GM18951 (cell line): ENCODE measurements at regions of chr1 and their contacts with region 1.

Region 1: GRCh38 chr1:109773146-109773899 is 9.6 kb upstream of the EPS8L3 start:
- POLR2A ChIP-seq: no peak

Region 2: DNA sequence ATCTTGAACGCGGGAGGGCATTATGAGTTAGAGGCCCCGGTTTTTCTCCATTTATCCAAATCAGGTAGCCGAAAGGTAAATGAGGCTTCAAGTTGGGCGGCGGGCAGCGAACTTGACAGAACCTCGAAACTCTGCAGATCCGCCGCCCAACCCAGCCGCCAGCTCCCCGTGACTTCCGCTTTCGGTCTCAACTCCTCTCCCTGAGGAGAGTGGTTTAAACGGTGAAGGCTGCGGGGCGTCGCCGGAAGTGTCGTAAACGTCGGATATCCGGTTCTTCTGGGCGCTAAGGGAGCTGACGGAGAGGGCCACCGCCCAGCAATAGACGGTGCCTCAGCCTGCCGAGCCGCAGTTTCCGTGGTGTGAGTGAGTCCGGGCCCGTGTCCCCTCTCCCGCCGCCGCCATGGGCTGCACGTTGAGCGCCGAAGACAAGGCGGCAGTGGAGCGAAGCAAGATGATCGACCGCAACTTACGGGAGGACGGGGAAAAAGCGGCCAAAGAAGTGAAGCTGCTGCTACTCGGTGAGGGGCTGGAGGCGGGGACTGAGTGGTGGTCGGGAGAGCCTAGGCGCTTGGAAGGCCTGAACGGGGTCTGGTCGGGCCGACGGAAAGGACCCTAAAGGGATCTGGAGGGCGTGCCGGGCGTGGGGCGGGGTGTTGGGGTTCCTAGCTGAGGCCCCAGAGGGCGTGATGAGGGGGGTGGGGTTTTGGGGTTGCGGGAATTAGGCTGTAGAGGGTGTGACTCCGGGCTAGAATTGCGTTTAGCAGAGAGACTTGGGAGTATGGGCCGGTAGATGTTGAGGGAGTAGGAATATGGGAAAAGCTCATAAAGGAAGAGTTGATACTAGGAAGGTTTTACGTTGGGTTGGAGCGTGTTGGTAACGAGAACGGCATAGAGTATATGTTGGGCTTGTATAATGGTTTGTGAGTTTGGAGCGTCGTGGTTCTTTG is 224.7 kb before region 1 on chr1 and contains the start of gene GNAI3:
- in situ Hi-C with region 1: loop called (anchors 5 kb)
- POLR2A ChIP-seq: peak; percentile 92

Region 3: GRCh38 chr1:109643385-109644230 is 129.7 kb before region 1 on chr1:
- in situ Hi-C with region 1: loop called (anchors 5 kb)
- POLR2A ChIP-seq: no peak